Naive thymus-derived CD4-positive, alpha-beta T cell (primary cell): ENCODE measurements at regions of chr1 and their contacts with region 1.

Region 1: DNA sequence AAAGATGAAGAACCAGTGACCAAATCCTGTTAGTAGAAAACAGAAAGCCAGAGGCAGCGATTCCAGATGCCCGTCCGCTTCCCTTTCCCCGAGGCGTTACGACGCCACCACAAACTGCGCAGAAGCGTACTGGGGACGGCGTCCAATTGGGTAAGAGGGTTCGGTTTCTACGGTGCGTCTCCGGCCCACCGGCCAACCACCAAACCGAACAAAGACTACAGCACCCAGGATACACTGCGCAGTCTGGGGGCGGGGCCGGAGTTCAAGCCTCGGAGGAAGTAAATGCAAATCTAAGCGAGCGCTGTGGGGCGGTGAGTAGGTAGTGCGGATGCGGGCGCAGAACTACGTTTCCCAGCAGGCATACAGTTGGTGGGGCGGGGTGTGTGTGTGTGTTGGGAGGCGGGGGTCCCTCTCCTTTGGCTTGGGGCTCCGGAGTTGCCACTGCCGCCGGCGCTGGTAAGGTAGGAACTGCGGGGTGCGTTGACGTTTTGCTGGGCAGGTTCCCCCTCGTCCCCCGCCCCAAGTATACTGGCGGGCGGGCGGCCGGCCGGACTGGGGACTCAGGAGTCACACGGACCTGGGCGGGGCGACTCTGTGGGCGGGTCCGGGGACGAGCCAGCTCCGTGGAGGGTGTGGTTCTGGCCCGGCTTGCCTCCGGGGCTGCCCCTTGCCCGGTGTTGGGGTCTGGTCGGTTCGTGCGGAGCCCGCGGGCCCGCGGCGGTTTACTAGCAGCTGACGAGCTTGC is at the starts of genes SWT1 and TRMT1L:
- DNase-seq: peak; percentile 91 to 97 (median 96)
- ATAC-seq: peak; percentile 95
- H3K4me3 ChIP-seq: peak within 1 kb of the TSS; percentile 88
- H3K4me3 Mint-ChIP-seq: peak within 1 kb of the TSS; percentile 97 to 100 (median 98)
- H3K27ac ChIP-seq: peak within 1 kb of the TSS; percentile 97
- H3K27ac Mint-ChIP-seq: peak within 1 kb of the TSS; percentile 96 to 100 (median 98)
- H3K4me1 ChIP-seq: peaks cover 9 to 20% of the 10 kb centered on the region in 2 donors
- H3K4me1 Mint-ChIP-seq: peaks cover 28 to 67% (median 56%) of the 10 kb centered on the region in 7 donors
- H3K27me3 ChIP-seq: no peaks in the 10 kb centered on the region
- H3K27me3 Mint-ChIP-seq: no peaks in the 10 kb centered on the region
- total RNA-seq, gene SWT1: 4.4 to 11.5 (median 5.2) TPM
- total RNA-seq, gene TRMT1L: 11.6 to 33.9 (median 27.3) TPM

Region 2: DNA sequence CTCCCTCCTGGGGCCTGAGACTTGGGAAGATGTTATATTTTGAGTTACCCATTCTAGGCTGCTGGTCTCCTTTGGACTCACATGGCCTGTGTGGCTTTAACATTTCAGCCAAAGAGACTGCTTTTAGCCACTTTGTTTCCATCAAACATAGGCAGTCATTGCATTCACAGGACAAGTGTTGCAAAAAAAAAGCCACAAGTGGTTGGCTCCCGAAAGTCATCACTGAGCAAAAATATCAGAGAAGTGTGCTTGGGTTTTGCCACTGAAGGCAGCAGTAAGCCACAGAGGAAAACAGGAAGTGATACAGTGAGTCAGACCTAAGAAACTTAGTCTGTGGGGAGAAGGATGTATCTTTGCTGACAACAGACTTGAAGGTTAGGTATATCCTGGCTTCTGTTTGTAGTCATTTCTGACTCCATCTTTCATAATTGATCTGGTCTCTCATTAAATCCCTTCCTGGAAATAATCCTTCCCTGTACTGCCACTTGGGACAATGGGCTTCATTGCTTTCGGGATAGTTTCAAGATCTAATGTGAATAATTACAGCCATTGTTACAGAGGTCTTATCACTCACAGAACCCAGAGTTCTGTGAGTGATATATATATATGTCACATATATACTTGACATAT is 1200.4 kb before region 1 on chr1:
- CTCF ChIA-PET with region 1: no interaction called
- POLR2A ChIA-PET with region 1: no interaction called
- intact Hi-C with region 1: loop called in 1 of 2 experiments (anchors 5 kb)
- DNase-seq: peak in 8 of 9 donors; percentile 60 to 82 (median 71)
- ATAC-seq: peak; percentile 99
- H3K4me3 ChIP-seq: no peak overlapping the region
- H3K4me3 Mint-ChIP-seq: peak overlapping the region in 8 of 10 donors; percentile 10 to 76 (median 30)
- H3K27ac ChIP-seq: peak overlapping the region; percentile 15
- H3K27ac Mint-ChIP-seq: no peak overlapping the region
- H3K4me1 ChIP-seq: peaks cover 17 to 36% of the 10 kb centered on the region in 2 donors
- H3K4me1 Mint-ChIP-seq: peaks cover 0 to 13% (median 9%) of the 10 kb centered on the region in 7 donors
- H3K27me3 ChIP-seq: no peaks in the 10 kb centered on the region
- H3K27me3 Mint-ChIP-seq: no peaks in the 10 kb centered on the region

Region 3: GRCh38 chr1:184973272-184974055 is 183.6 kb before region 1 on chr1:
- CTCF ChIA-PET with region 1: no interaction called
- POLR2A ChIA-PET with region 1: no interaction called
- intact Hi-C with region 1: loop called in 1 of 2 experiments (anchors 1 kb)
- DNase-seq: peak in 1 of 9 donors; percentile 36
- ATAC-seq: peak; percentile 73
- H3K4me3 ChIP-seq: peak overlapping the region; percentile 63
- H3K4me3 Mint-ChIP-seq: peak overlapping the region; percentile 82 to 96 (median 90)
- H3K27ac ChIP-seq: peak overlapping the region; percentile 7
- H3K27ac Mint-ChIP-seq: peak overlapping the region; percentile 11 to 94 (median 58)
- H3K4me1 ChIP-seq: peaks cover 0 to 24% of the 10 kb centered on the region in 2 donors
- H3K4me1 Mint-ChIP-seq: peaks cover 9 to 56% (median 21%) of the 10 kb centered on the region in 7 donors
- H3K27me3 ChIP-seq: no peaks in the 10 kb centered on the region
- H3K27me3 Mint-ChIP-seq: peaks cover 12 to 38% (median 27%) of the 10 kb centered on the region in 5 donors

Region 4: DNA sequence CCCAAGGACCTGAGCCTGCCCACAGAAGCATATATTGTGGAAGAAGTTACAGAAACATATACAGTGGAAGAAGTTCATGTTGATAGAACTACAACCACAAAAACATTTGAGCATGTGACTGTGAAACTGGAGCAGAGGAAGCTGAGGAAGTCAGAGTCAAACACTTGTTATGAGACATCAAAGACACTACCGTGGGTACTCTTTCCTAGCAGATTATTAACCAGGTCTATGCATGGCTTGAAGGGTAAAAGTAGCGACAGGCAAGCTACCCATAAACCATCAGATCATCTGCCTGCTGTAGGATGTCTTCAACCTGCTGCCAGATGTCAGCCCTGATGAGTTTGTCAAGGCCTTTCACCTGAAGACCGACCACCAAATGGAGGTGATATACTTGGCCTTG is 124.2 kb after region 1 on chr1:
- CTCF ChIA-PET with region 1: no interaction called
- POLR2A ChIA-PET with region 1: no interaction called
- intact Hi-C with region 1: loop called (anchors 10 kb)
- DNase-seq: peak in 7 of 9 donors; percentile 56 to 81 (median 72)
- ATAC-seq: peak; percentile 92
- H3K4me3 ChIP-seq: peak overlapping the region; percentile 11
- H3K4me3 Mint-ChIP-seq: peak overlapping the region; percentile 62 to 88 (median 75)
- H3K27ac ChIP-seq: peak overlapping the region; percentile 59
- H3K27ac Mint-ChIP-seq: peak overlapping the region; percentile 86 to 100 (median 96)
- H3K4me1 ChIP-seq: peaks cover 23 to 55% of the 10 kb centered on the region in 2 donors
- H3K4me1 Mint-ChIP-seq: peaks cover 40 to 75% (median 71%) of the 10 kb centered on the region in 7 donors
- H3K27me3 ChIP-seq: no peaks in the 10 kb centered on the region
- H3K27me3 Mint-ChIP-seq: no peaks in the 10 kb centered on the region

Region 5: DNA sequence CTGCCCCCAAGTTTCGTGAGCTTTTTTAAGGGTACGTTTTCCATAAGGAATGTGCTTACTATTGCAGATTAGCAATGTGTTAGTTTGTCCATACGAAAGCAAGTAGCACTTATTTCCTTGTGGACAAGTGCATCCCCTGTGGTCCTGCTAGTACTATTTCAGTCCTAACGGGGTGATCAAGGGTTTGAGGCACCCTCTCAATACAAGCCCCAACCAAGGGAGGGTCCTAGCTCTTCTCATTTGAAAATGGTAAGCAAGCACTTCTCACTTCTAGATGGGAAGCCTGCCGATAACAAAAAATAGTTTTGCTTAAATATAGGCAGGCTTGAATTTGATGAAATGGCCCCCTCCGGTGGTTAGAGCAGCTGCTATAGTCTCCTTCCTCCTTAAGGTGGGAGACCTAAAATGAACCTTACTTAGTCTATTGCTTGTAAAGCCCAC is 513.2 kb after region 1 on chr1:
- CTCF ChIA-PET with region 1: interaction called, 3 read pairs
- POLR2A ChIA-PET with region 1: interaction called, 6 read pairs
- intact Hi-C with region 1: loop called in 1 of 2 experiments (anchors 1 kb)
- DNase-seq: peak in 8 of 9 donors; percentile 28 to 72 (median 59)
- ATAC-seq: peak; percentile 82
- H3K4me3 ChIP-seq: no peak overlapping the region
- H3K4me3 Mint-ChIP-seq: no peak overlapping the region
- H3K27ac ChIP-seq: no peak overlapping the region
- H3K27ac Mint-ChIP-seq: peak overlapping the region in 8 of 9 donors; percentile 12 to 75 (median 60)
- H3K4me1 ChIP-seq: peaks cover 4 to 20% of the 10 kb centered on the region in 2 donors
- H3K4me1 Mint-ChIP-seq: peaks cover 22 to 44% (median 33%) of the 10 kb centered on the region in 7 donors
- H3K27me3 ChIP-seq: no peaks in the 10 kb centered on the region
- H3K27me3 Mint-ChIP-seq: no peaks in the 10 kb centered on the region

Region 6: GRCh38 chr1:186304982-186305949 is 1148.2 kb after region 1 on chr1:
- CTCF ChIA-PET with region 1: no interaction called
- POLR2A ChIA-PET with region 1: no interaction called
- intact Hi-C with region 1: loop called in 1 of 2 experiments (anchors 1 kb)
- DNase-seq: peak in 6 of 9 donors; percentile 34 to 51 (median 42)
- ATAC-seq: peak; percentile 39
- H3K4me3 ChIP-seq: no peak overlapping the region
- H3K4me3 Mint-ChIP-seq: peak overlapping the region in 9 of 10 donors; percentile 2 to 76 (median 45)
- H3K27ac ChIP-seq: peak overlapping the region; percentile 58
- H3K27ac Mint-ChIP-seq: peak overlapping the region; percentile 82 to 95 (median 91)
- H3K4me1 ChIP-seq: peaks cover 3 to 83% of the 10 kb centered on the region in 2 donors
- H3K4me1 Mint-ChIP-seq: peaks cover 35 to 66% (median 56%) of the 10 kb centered on the region in 7 donors
- H3K27me3 ChIP-seq: no peaks in the 10 kb centered on the region
- H3K27me3 Mint-ChIP-seq: no peaks in the 10 kb centered on the region